ENCODE measurements at regions of chr2 and their contacts with region 1.

Region 1: GRCh38 chr2:11357428-11357972 is 13.1 kb upstream of the ROCK2 start:
- DNase-seq: no peak
- ATAC-seq: no peak
- H3K4me3 ChIP-seq: no peak overlapping the region
- H3K27ac ChIP-seq: no peak overlapping the region
- H3K4me1 ChIP-seq: no peaks in the 10 kb centered on the region
- H3K27me3 ChIP-seq: no peaks in the 10 kb centered on the region
- CTCF ChIP-seq: no peak

Region 2: DNA sequence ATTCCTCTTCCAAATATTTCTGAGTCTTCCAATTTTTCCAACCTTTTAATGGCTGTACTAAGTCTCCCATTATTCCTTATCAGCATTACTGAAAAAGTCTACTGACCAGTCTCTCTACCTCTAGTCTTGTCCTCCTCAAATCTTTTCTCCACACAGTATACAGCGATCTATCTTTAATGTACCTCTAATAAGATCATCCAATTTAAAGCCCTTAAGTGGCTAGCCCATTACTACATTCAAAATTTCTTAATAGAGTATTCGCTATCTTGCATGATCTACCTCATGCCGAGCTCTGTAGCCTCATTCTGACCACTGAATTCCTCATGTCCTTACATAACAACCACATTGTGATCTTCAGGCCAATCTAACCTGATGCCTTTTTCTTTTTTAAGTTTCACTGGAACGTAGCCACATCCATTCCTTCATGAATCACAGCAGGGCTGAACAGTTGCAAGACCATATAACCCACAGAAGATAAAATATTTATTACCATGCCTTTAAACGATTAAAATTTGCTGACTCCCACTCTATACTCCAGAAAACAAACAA is 144.3 kb before region 1 on chr2:
- CTCF ChIA-PET with region 1: no interaction called
- POLR2A ChIA-PET with region 1: interaction called, 12 read pairs
- intact Hi-C with region 1: no loop called
- DNase-seq: peak; percentile 28
- ATAC-seq: no peak
- H3K4me3 ChIP-seq: no peak overlapping the region
- H3K27ac ChIP-seq: no peak overlapping the region
- H3K4me1 ChIP-seq: no peaks in the 10 kb centered on the region
- H3K27me3 ChIP-seq: no peaks in the 10 kb centered on the region
- CTCF ChIP-seq: no peak

Region 3: DNA sequence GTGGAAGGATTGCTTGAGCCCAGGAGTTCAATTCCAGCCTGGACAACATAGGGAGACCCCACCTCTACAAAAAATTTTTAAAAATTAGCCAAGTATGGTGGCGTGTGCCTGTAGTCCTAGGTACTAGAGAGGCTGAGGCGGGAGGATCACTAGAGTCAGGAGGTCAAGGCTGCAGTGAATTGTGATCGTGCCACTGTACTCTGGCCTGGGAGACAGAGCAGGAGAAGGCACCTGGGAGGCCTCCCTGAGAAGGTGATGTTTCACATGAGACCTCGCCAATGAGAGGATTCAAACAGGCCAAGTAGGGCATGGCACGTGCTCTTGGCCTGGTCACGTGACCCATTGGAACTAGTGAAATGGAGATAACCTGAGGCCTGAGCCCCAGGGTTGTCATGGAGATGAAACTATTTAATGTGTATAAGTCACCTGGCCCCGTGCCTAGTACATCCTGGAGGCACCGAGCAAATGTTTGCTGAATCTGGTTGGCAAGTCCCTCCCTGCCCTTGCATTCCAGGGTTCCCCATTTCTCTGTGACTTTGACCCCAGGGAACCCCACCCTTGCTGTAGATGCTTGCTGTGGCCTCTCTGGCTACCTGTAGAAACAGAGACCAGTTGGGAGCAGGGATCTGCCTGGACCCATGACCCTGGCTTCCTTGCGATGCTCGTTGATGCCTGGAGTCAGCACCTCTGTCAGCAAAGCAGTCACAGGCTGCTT is 13.0 kb after region 1 on chr2:
- CTCF ChIA-PET with region 1: no interaction called
- POLR2A ChIA-PET with region 1: interaction called, 4 read pairs
- intact Hi-C with region 1: loop called (anchors 1 kb)
- DNase-seq: peak; percentile 94
- ATAC-seq: peak; percentile 30
- H3K4me3 ChIP-seq: no peak overlapping the region
- H3K27ac ChIP-seq: peak overlapping the region; percentile 41
- H3K4me1 ChIP-seq: peaks cover 50% of the 10 kb centered on the region
- H3K27me3 ChIP-seq: no peaks in the 10 kb centered on the region
- CTCF ChIP-seq: no peak

Region 4: DNA sequence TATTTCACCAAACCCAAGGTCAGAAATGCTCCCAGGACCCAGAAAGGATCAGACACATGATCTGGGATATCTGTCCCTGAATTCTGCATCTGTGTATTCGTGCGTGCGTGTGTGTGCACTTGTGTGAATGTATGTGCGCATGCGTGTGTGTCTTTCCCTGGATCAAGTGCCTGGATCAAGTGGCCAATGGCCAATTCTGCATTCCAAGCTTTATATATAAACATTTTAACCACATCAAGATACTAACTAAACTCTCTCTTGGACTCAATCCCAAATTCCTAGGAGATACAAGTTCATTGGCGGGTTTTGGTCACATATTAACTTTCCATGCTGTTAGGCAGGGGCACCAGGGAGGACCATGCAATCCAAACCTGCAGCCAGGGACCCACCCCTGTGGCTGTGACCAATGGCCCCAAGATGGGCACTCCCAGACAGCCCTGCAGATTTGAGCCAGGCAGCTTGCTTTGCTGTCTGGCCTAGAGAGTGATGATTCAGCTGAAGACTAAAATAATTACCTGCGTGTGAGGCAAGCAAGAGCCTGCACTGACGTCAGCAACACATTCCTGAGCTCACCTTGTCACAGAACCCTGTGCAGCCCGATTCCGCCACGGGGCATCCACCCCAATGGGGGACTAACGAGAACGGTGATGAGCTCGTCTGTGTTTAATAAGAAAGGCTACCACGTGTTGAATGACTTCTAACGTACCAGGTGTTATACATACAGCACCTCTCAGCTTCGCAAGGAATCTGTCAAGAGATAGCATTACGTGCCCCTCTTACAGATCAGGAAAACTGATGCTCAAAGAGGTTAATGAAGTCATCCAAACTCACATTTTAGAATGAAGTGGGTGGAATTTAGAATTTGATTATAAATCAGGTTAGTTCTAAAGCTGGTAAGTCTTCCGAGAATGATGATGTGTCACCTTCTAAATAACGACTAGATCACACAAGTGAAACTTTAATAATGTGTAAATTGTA is 32.3 kb after region 1 on chr2:
- CTCF ChIA-PET with region 1: no interaction called
- POLR2A ChIA-PET with region 1: no interaction called
- intact Hi-C with region 1: loop called (anchors 2 kb)
- DNase-seq: peak; percentile 77
- ATAC-seq: peak; percentile 29
- H3K4me3 ChIP-seq: no peak overlapping the region
- H3K27ac ChIP-seq: peak overlapping the region; percentile 61
- H3K4me1 ChIP-seq: peaks cover 49% of the 10 kb centered on the region
- H3K27me3 ChIP-seq: no peaks in the 10 kb centered on the region
- CTCF ChIP-seq: no peak